Esophagus squamous epithelium (tissue), 5 donors: ENCODE measurements at regions of chr7 and their contacts with region 1.

Region 1: GRCh38 chr7:21253740-21254687 is 173.9 kb upstream of the SP4 start:
- DNase-seq: no peak
- H3K4me3 ChIP-seq: no peak overlapping the region
- H3K27ac ChIP-seq: no peak overlapping the region
- H3K4me1 ChIP-seq: no peaks in the 10 kb centered on the region
- H3K27me3 ChIP-seq: peaks cover 0 to 88% (median 8%) of the 10 kb centered on the region in 4 donors
- CTCF ChIP-seq: peak in 5 of 6 experiments; percentile 33 to 46 (median 36)
- POLR2A ChIP-seq: no peak

Region 2: DNA sequence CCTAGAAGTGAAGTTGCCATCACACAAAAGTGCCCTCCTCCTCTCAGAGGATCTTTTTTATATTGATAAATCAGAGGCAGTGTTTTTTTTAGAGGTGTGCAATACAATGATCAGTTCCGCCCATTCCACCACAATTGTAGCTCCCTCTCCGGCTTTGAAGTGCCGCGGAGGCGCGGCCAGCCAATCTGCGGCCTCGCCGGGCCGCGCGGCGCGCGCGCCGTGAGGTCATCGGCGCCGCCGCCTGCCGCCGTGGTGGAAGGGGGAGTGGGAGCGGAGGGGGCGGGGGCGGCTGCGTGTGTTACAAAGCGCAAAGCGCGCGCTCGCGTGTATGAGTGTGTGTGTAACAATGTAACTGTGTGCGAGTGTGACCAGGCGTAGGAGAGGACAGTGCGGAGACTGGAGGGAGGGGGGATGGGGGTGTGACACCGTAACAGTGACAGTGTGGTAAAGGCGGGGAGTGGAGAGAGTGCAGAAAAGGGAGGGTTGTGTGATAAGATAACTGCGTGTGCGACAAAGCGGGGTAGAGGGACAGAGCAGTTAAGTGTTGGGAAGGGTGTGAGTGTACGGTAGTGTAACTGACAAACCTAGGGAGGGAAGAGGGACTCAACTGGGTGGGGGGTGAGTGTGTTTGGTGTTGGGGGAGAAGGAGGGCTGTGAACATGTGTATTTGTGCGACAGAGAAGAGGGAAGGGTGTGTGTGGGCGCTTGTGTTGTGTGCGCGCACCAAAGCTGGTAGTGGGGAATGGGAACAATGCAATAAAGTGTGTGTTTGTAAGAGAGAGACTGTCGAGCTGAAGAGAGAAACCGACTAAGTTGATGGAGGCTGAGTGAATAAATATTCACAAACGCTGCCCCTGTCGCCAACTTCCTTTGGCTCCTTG is 467.0 kb before region 1 on chr7 and contains the start of gene SP8:
- intact Hi-C with region 1: loop called (anchors 10 kb)
- DNase-seq: no peak
- H3K4me3 ChIP-seq: peak within 1 kb of the TSS; percentile 15 to 55 (median 30)
- H3K27ac ChIP-seq: no peak within 1 kb of the TSS
- H3K4me1 ChIP-seq: peaks cover 20 to 50% (median 33%) of the 10 kb centered on the region in 3 donors
- H3K27me3 ChIP-seq: peaks cover 27 to 100% (median 55%) of the 10 kb centered on the region in 4 donors
- CTCF ChIP-seq: no peak
- POLR2A ChIP-seq: no peak
- total RNA-seq, gene SP8: not detected

Region 3: GRCh38 chr7:21011118-21011517 is 242.9 kb before region 1 on chr7:
- intact Hi-C with region 1: no loop called
- DNase-seq: no peak
- H3K4me3 ChIP-seq: no peak overlapping the region
- H3K27ac ChIP-seq: no peak overlapping the region
- H3K4me1 ChIP-seq: peaks cover 0 to 32% (median 2%) of the 10 kb centered on the region in 3 donors
- H3K27me3 ChIP-seq: no peaks in the 10 kb centered on the region
- CTCF ChIP-seq: no peak
- POLR2A ChIP-seq: no peak

Region 4: DNA sequence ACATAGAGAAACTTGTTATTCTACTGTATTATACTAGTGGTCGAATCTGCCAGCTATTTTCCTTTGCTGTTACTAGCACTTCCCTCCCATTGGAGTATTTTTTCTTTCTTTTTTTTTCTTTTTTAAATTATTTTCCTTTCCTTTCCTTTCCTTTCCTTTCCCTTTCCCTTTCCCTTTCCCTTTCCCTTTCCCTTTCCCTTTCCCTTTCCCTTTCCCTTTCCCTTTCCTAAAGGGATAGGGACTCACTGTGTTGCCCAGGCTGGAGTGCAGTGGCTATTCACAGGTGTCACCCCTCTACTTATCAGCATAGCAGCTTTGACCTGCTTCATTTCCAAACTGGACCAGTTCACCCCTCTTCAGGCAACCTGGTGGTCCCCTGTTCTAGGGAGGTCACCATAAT is 38.7 kb before region 1 on chr7:
- intact Hi-C with region 1: no loop called
- DNase-seq: no peak
- H3K4me3 ChIP-seq: no peak overlapping the region
- H3K27ac ChIP-seq: no peak overlapping the region
- H3K4me1 ChIP-seq: no peaks in the 10 kb centered on the region
- H3K27me3 ChIP-seq: peaks cover 0 to 3% (median 1%) of the 10 kb centered on the region in 4 donors
- CTCF ChIP-seq: no peak
- POLR2A ChIP-seq: no peak

Region 5: GRCh38 chr7:21365866-21366624 is 112.0 kb after region 1 on chr7:
- intact Hi-C with region 1: no loop called
- DNase-seq: no peak
- H3K4me3 ChIP-seq: no peak overlapping the region
- H3K27ac ChIP-seq: no peak overlapping the region
- H3K4me1 ChIP-seq: no peaks in the 10 kb centered on the region
- H3K27me3 ChIP-seq: no peaks in the 10 kb centered on the region
- CTCF ChIP-seq: no peak
- POLR2A ChIP-seq: no peak

Region 6: GRCh38 chr7:21507626-21508343 is 253.8 kb after region 1 on chr7:
- intact Hi-C with region 1: loop called (anchors 10 kb)
- DNase-seq: no peak
- H3K4me3 ChIP-seq: no peak overlapping the region
- H3K27ac ChIP-seq: no peak overlapping the region
- H3K4me1 ChIP-seq: no peaks in the 10 kb centered on the region
- H3K27me3 ChIP-seq: no peaks in the 10 kb centered on the region
- CTCF ChIP-seq: peak; percentile 36 to 69 (median 62)
- POLR2A ChIP-seq: no peak

Region 7: DNA sequence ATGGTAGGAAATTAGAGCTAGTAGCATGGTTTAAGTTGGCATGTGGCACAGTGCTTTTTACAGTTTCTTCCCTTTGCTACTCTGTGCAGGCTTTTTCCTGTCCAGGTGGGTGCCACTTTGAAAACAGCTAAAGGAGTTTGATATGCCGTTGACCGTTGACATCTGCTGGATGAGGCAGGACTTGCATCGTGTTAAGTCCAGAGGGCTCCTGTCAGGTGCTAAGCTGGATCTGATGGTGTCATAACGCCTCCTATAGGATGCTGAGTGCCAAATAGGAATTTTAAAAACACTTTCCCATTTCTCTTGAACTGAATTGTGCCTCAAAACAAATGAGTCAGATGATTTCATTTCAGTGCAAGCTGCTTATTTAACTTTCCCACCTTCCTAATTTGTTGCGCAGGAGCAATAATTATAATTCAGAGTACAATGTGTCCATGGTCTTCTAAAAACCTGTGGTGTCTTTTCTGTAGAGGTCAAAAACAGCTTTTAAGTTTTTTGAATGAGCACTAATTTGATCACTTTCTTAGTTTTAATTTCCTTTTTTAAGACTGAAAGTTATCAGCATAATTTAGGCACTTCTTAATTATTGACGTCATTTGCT is 513.4 kb after region 1 on chr7:
- intact Hi-C with region 1: loop called (anchors 10 kb)
- DNase-seq: no peak
- H3K4me3 ChIP-seq: no peak overlapping the region
- H3K27ac ChIP-seq: no peak overlapping the region
- H3K4me1 ChIP-seq: peaks cover 0 to 5% (median 0%) of the 10 kb centered on the region in 3 donors
- H3K27me3 ChIP-seq: peaks cover 0 to 13% (median 0%) of the 10 kb centered on the region in 4 donors
- CTCF ChIP-seq: peak in 5 of 6 experiments; percentile 24 to 73 (median 52)
- POLR2A ChIP-seq: no peak